ENCODE measurements at regions of chr11 and their contacts with region 1.

Region 1: GRCh38 chr11:62542750-62543567 is 3.6 kb downstream of the AHNAK start:
- DNase-seq: peak; percentile 85
- ATAC-seq: peak; percentile 65
- H3K4me3 Mint-ChIP-seq: peak overlapping the region; percentile 79
- H3K27ac Mint-ChIP-seq: peak overlapping the region; percentile 73
- H3K4me1 Mint-ChIP-seq: peaks cover 76% of the 10 kb centered on the region
- H3K27me3 Mint-ChIP-seq: peaks cover 3% of the 10 kb centered on the region
- CTCF ChIP-seq: peak; percentile 100

Region 2: DNA sequence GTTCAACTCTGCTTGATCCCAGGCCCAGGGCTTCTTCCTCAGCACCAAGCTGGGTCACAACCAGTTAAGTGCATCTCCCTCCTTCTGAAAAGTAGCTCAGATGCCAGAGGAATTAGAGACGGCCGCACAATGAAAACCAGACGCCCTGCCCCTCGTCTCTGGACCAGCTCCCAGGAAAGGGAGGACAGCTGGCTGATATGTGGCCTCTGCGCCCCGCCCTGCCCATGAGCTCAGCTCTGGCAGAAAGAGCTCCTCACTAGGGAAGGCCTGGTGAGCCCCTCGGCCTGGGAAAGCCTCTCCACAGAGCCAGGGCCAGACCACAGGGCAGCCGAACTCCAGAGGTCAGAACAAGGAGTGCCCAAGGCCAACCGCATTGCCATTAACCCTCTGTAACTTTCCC is 142.2 kb before region 1 on chr11:
- CTCF ChIA-PET with region 1: interaction called, 59 read pairs
- POLR2A ChIA-PET with region 1: interaction called, 9 read pairs
- intact Hi-C with region 1: no loop called
- DNase-seq: no peak
- ATAC-seq: no peak
- H3K4me3 Mint-ChIP-seq: peak overlapping the region; percentile 14
- H3K27ac Mint-ChIP-seq: no peak overlapping the region
- H3K4me1 Mint-ChIP-seq: peaks cover 47% of the 10 kb centered on the region
- H3K27me3 Mint-ChIP-seq: no peaks in the 10 kb centered on the region
- CTCF ChIP-seq: no peak

Region 3: GRCh38 chr11:62487738-62488551 is 55.0 kb before region 1 on chr11:
- CTCF ChIA-PET with region 1: interaction called, 10 read pairs
- POLR2A ChIA-PET with region 1: no interaction called
- intact Hi-C with region 1: no loop called
- DNase-seq: no peak
- ATAC-seq: no peak
- H3K4me3 Mint-ChIP-seq: no peak overlapping the region
- H3K27ac Mint-ChIP-seq: no peak overlapping the region
- H3K4me1 Mint-ChIP-seq: peaks cover 2% of the 10 kb centered on the region
- H3K27me3 Mint-ChIP-seq: no peaks in the 10 kb centered on the region
- CTCF ChIP-seq: no peak

Region 4: DNA sequence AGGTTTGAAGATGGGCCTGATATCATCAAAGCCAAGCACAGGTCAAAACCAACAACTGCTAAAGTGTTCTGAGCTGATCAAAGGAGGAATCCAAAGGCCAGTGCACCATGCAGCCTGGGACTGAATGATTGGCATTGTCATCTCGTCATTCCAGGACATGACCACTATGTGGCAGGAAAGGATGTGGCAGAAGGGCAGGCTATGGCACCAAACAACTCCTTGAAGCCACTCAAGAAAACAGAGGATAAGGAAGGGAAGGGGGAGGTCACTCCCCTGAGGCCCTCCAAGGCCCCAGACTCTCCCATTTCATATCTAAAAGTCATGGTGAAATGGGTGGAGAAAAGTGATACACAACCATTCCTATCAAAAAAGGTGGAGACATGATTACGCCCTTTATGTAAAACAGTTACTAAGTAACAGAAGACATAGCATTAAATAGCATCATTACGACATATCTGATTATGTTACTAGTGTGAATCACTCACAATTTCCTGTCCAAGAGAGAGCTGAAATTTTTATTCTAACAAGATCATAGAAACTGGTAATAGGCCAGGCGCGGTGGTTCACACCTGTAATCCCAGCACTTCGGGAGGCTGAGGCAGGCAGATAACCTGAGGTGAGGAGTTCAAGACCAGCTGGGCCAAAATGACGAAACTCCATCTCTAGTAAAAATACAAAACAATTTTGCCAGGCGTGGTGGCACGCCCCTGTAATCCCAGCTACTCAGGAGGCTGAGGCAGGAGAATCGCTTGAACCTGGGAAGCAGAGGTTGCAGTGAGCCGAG is 45.6 kb before region 1 on chr11:
- CTCF ChIA-PET with region 1: interaction called, 12 read pairs
- POLR2A ChIA-PET with region 1: interaction called, 3 read pairs
- intact Hi-C with region 1: no loop called
- DNase-seq: peak; percentile 33
- ATAC-seq: peak; percentile 79
- H3K4me3 Mint-ChIP-seq: no peak overlapping the region
- H3K27ac Mint-ChIP-seq: no peak overlapping the region
- H3K4me1 Mint-ChIP-seq: no peaks in the 10 kb centered on the region
- H3K27me3 Mint-ChIP-seq: peaks cover 8% of the 10 kb centered on the region
- CTCF ChIP-seq: peak; percentile 23

Region 5: DNA sequence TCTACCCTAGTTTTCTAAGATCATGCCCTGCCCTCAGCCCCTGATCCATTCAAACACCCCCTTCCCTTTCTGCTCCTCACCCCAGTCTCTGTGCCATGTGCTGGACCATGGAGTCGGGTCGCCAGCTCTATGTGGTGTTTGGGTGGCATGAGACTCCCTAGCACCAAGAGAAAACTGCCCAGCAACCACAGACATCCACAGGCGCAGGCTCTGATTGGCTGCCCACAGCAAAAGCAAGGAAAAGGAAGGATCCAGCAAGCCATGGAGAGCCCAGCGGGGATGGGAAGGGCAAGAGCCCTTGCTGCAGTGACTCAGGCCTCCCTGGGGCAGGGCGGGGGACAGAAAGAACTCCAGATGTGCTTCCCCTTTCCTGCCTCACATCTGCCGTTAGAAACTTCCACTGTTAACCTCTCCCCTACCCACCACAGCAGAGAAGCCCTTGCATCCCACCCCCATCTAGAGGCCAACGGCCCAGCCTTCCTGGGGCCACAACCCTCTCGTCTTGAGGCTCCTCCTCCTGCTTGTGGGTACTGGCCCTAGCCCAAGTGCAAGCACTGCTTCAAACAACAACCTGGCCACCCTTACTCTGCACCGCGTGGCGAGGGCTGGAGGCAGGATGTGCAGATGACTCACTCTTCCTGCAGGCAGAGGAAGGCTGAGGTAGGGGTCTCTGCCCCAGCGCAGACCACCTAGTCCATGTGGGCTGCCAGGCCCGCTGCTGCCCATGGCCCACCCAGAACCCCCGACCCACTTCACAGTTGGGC is 13.3 kb after region 1 on chr11:
- CTCF ChIA-PET with region 1: interaction called, 97 read pairs
- POLR2A ChIA-PET with region 1: interaction called, 38 read pairs
- intact Hi-C with region 1: loop called (anchors 2 kb)
- DNase-seq: peak; percentile 95
- ATAC-seq: peak; percentile 68
- H3K4me3 Mint-ChIP-seq: peak overlapping the region; percentile 41
- H3K27ac Mint-ChIP-seq: peak overlapping the region; percentile 94
- H3K4me1 Mint-ChIP-seq: peaks cover 92% of the 10 kb centered on the region
- H3K27me3 Mint-ChIP-seq: no peaks in the 10 kb centered on the region
- CTCF ChIP-seq: no peak

Region 6: DNA sequence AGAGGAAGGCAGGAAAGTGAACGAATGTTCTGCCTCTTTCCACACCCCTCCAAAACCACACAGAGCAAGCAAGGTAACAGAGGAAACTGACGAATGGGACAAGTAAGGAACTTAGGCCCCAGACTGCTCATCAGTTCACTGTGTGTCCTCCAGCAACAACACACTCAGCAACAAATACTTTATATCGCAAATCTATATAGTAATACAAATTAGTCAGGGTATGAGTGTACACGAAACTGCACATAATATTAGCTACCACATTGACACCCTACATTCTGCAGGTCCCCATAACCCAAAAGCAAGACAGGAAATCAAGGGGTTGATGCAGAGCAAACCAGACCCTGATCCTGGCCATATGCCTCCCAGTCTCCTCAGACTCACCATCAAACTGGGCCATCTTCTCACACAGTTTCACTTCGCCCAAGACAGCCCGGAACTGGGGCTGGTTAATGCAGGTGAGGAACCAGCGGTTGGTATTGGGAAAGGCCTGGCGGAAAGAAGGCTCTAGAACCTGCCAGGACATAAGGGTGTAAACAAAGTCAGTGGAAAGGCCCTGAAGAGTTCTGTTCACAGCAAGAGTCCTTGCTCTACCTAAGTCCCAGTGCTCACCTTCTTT is 24.2 kb after region 1 on chr11:
- CTCF ChIA-PET with region 1: interaction called, 16 read pairs
- POLR2A ChIA-PET with region 1: interaction called, 4 read pairs
- intact Hi-C with region 1: no loop called
- DNase-seq: no peak
- ATAC-seq: peak; percentile 49
- H3K4me3 Mint-ChIP-seq: no peak overlapping the region
- H3K27ac Mint-ChIP-seq: peak overlapping the region; percentile 61
- H3K4me1 Mint-ChIP-seq: peaks cover 57% of the 10 kb centered on the region
- H3K27me3 Mint-ChIP-seq: no peaks in the 10 kb centered on the region
- CTCF ChIP-seq: no peak

Measured in activated CD8-positive, alpha-beta T cell treated with anti-CD3 and anti-CD28 coated beads for 36 hours (primary cell).